ENCODE measurements at regions of chr6 and their contacts with region 1.

Region 1: GRCh38 chr6:142692942-142693341 is 252.0 kb downstream of the HIVEP2 start:
- DNase-seq: peak; percentile 85
- H3K4me3 ChIP-seq: peak overlapping the region in 1 of 3 experiments; percentile 2
- H3K27ac ChIP-seq: peak overlapping the region; percentile 85
- H3K4me1 ChIP-seq: peaks cover 13% of the 10 kb centered on the region
- H3K27me3 ChIP-seq: no peaks in the 10 kb centered on the region
- CTCF ChIP-seq: peak; percentile 80 to 88
- POLR2A ChIP-seq: no peak

Region 2: GRCh38 chr6:142146828-142147662 is 545.9 kb before region 1 on chr6 and contains the starts of genes NMBR and VTA1:
- CTCF ChIA-PET with region 1: no interaction called
- POLR2A ChIA-PET with region 1: no interaction called
- dilution Hi-C with region 1: no loop called
- intact Hi-C with region 1: loop called (anchors 1 kb)
- DNase-seq: peak; percentile 99
- H3K4me3 ChIP-seq: peak within 1 kb of the TSS; percentile 77 to 92 (median 91)
- H3K27ac ChIP-seq: peak within 1 kb of the TSS; percentile 50
- H3K4me1 ChIP-seq: peaks cover 21% of the 10 kb centered on the region
- H3K27me3 ChIP-seq: no peaks in the 10 kb centered on the region
- CTCF ChIP-seq: peak; percentile 79 to 89
- POLR2A ChIP-seq: peak; percentile 90
- total RNA-seq, gene NMBR: not detected in 2 replicates
- total RNA-seq, gene VTA1: 40.9 and 45.8 TPM in 2 replicates

Region 3: GRCh38 chr6:142395768-142396231 is 297.1 kb before region 1 on chr6:
- CTCF ChIA-PET with region 1: no interaction called
- POLR2A ChIA-PET with region 1: no interaction called
- dilution Hi-C with region 1: no loop called
- intact Hi-C with region 1: no loop called
- DNase-seq: peak; percentile 94
- H3K4me3 ChIP-seq: no peak overlapping the region
- H3K27ac ChIP-seq: peak overlapping the region; percentile 99
- H3K4me1 ChIP-seq: peaks cover 47% of the 10 kb centered on the region
- H3K27me3 ChIP-seq: no peaks in the 10 kb centered on the region
- CTCF ChIP-seq: no peak
- POLR2A ChIP-seq: no peak

Region 4: DNA sequence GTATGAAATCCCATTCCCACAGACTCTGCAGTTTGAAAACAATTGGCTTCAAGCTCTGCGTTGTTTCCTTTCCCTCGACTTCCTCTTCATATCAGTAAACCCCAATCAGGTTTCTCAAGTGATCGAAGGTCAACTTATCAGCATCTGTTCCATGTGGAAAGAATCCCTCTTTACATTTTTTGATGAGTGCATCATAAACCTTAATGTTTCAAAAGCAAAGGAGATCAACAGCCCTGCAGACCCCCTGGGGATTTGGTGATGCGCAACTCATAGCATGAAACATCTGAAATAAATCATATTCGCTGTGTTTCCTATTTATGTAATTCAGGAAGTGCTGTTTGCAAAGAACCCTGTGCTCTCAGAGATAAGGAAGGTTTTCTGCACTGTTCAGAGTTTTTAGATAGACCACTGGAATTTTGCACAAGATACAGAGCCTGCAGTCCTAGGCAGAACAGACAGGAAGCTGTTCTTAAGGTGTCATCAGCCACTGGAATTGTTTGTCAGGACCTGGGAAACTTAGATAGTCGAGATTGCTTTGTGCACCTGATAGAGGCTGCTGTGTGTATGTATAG is 36.1 kb after region 1 on chr6:
- CTCF ChIA-PET with region 1: interaction called, 4 read pairs
- POLR2A ChIA-PET with region 1: no interaction called
- dilution Hi-C with region 1: no loop called
- intact Hi-C with region 1: loop called (anchors 1 kb)
- DNase-seq: peak; percentile 95
- H3K4me3 ChIP-seq: peak overlapping the region in 1 of 3 experiments; percentile 25
- H3K27ac ChIP-seq: peak overlapping the region; percentile 16
- H3K4me1 ChIP-seq: peaks cover 19% of the 10 kb centered on the region
- H3K27me3 ChIP-seq: peaks cover 0 to 9% of the 10 kb centered on the region in 2 experiments
- CTCF ChIP-seq: no peak
- POLR2A ChIP-seq: no peak

Region 5: DNA sequence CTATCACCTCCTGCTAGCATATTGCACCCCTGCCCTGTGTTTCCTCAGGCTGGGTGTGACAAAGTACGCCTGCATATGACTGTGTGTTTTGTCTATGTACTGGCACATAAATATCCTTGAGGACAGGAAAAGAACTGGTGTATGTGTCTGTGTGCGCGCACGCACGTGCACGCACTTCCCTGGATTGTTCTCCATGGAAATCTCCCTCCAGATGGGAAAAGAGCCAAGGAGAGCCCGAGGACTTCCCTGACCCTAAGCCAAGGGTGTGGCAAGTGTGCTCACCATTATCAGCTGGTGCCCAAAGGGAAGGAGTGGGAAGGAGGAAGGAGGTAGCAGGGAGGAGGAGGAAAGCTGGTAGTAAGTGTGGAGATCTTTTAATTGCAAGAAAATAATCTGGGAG is 134.4 kb after region 1 on chr6:
- CTCF ChIA-PET with region 1: no interaction called
- POLR2A ChIA-PET with region 1: interaction called, 3 read pairs
- dilution Hi-C with region 1: no loop called
- intact Hi-C with region 1: loop called (anchors 1 kb)
- DNase-seq: peak; percentile 98
- H3K4me3 ChIP-seq: no peak overlapping the region
- H3K27ac ChIP-seq: peak overlapping the region; percentile 59
- H3K4me1 ChIP-seq: peaks cover 15% of the 10 kb centered on the region
- H3K27me3 ChIP-seq: no peaks in the 10 kb centered on the region
- CTCF ChIP-seq: no peak
- POLR2A ChIP-seq: no peak

Region 6: DNA sequence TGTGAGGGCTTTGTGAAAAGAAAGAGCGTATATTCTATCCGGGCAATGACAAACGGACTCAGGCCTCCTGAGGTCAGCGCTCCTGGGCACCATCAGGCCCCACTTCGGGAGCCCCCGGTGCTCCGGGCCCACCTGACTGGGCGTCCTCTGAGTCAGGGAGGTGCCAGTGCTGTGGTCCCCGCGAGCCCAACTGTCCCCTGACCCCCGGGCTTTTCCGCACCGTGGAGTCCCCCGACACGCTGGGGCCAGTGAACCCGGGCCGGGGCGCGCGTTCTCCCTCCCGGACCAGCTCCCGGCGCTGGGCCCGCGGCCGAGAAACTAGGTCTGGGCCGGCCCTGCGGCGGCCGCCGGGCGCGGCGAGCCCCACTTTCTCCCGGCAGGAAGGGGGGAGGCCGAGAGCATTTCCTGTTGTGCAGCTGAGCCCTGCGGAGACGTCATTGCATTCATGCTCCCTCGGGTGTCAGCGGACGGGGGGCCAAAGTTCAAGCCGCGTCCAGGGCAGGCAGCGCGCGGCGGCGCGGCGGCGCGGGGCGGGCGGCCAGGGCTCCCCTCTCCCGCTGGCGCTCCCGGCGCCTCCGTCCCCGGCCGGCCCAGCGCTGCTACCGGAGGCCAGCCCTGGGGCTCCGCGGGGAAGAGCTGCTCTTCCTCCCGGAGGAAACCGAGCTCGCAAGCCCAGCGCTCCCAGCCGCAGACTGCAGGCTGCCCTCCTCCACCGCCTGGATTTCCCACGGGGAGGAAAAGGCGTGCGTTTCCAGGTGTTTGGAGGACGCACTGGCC is 233.7 kb after region 1 on chr6:
- CTCF ChIA-PET with region 1: interaction called, 3 read pairs
- POLR2A ChIA-PET with region 1: no interaction called
- dilution Hi-C with region 1: no loop called
- intact Hi-C with region 1: loop called (anchors 1 kb)
- DNase-seq: peak; percentile 82
- H3K4me3 ChIP-seq: peak overlapping the region; percentile 47 to 76 (median 60)
- H3K27ac ChIP-seq: peak overlapping the region; percentile 79
- H3K4me1 ChIP-seq: peaks cover 16% of the 10 kb centered on the region
- H3K27me3 ChIP-seq: no peaks in the 10 kb centered on the region
- CTCF ChIP-seq: no peak
- POLR2A ChIP-seq: peak; percentile 34

Region 7: GRCh38 chr6:143232849-143233248 is 539.9 kb after region 1 on chr6:
- CTCF ChIA-PET with region 1: interaction called, 13 read pairs
- POLR2A ChIA-PET with region 1: no interaction called
- dilution Hi-C with region 1: no loop called
- intact Hi-C with region 1: loop called (anchors 1 kb)
- DNase-seq: peak; percentile 44
- H3K4me3 ChIP-seq: no peak overlapping the region
- H3K27ac ChIP-seq: no peak overlapping the region
- H3K4me1 ChIP-seq: no peaks in the 10 kb centered on the region
- H3K27me3 ChIP-seq: no peaks in the 10 kb centered on the region
- CTCF ChIP-seq: peak; percentile 52 to 65
- POLR2A ChIP-seq: no peak

Region 8: DNA sequence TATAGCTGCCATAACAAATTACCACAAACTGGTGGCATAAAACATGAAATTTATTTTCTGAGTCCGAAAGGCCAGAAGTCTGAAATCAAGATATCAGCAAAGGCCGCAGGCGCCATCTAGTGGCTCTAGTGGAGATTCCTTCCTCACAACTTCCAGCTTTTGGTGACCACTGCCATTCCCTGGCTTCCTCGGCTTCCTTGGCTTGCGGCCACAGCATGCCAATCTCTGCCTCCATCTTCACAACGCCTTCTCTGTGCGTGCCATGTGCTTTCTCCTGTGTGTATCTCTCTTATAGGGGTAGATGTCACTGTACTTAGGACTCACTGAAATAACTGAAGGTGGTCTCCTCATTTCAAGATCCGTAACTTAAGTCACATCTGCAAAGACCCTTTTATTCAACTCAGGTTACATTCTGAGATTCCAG is 1320.6 kb after region 1 on chr6:
- CTCF ChIA-PET with region 1: no interaction called
- POLR2A ChIA-PET with region 1: no interaction called
- dilution Hi-C with region 1: no loop called
- intact Hi-C with region 1: loop called (anchors 2 kb)
- DNase-seq: peak; percentile 77
- H3K4me3 ChIP-seq: no peak overlapping the region
- H3K27ac ChIP-seq: no peak overlapping the region
- H3K4me1 ChIP-seq: no peaks in the 10 kb centered on the region
- H3K27me3 ChIP-seq: peaks cover 11 to 16% of the 10 kb centered on the region in 2 experiments
- CTCF ChIP-seq: peak; percentile 80 to 83
- POLR2A ChIP-seq: no peak

Measured in endothelial cell of umbilical vein (primary cell).